Thyroid gland (tissue), 4 donors: ENCODE measurements at regions of chr11 and their contacts with region 1.

Region 1: GRCh38 chr11:16785520-16786128 is 47.2 kb downstream of the C11orf58 start:
- DNase-seq: peak; percentile 76 to 79
- H3K4me3 ChIP-seq: no peak overlapping the region
- H3K27ac ChIP-seq: peak overlapping the region in 1 of 3 donors; percentile 33
- H3K4me1 ChIP-seq: peaks cover 44 to 59% of the 10 kb centered on the region in 2 donors
- H3K27me3 ChIP-seq: no peaks in the 10 kb centered on the region
- CTCF ChIP-seq: peak; percentile 67 to 91 (median 76)
- POLR2A ChIP-seq: no peak

Region 2: GRCh38 chr11:16871368-16871767 is 85.7 kb after region 1 on chr11:
- intact Hi-C with region 1: loop called (anchors 5 kb)
- DNase-seq: no peak
- H3K4me3 ChIP-seq: no peak overlapping the region
- H3K27ac ChIP-seq: no peak overlapping the region
- H3K4me1 ChIP-seq: peaks cover 0 to 2% of the 10 kb centered on the region in 2 donors
- H3K27me3 ChIP-seq: no peaks in the 10 kb centered on the region
- CTCF ChIP-seq: no peak
- POLR2A ChIP-seq: no peak

Region 3: DNA sequence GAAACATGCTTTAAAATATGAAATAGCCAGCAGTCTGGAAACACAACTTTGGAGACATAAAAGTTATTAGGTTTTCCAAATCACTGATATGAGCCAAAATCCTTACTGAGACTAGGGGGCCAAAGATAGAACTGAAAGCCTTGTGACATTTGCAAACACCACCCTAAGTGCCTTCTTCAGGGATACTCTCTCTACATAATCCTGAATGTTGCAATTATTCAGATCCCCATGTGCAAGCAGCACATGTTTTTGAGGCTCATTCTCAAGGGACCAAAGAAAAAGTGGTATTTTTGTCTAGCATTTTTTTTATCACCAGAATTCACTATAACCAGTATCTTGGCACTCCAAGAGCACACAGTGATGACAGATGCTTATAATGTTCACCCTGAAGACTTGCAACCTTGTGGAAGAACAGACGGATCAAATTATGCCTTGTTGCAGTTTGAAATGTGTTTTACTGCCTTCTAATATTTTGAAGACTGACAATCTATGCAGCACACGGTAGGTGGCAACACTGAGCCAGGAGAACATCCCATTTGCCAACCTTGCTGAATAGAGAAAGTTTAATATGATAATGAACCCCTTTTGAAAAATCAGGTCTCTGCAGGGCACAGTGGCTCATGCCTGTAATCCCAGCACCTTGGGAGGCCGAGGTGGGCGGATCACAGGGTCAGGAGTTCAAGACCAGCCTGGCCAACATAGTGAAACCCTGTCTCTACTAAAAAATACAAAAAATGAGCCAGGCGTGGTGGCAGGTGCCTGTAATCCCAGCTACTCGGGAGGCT is 150.1 kb after region 1 on chr11:
- intact Hi-C with region 1: loop called (anchors 10 kb)
- DNase-seq: peak in 1 of 2 donors; percentile 39
- H3K4me3 ChIP-seq: no peak overlapping the region
- H3K27ac ChIP-seq: peak overlapping the region in 1 of 3 donors; percentile 64
- H3K4me1 ChIP-seq: peaks cover 16 to 38% of the 10 kb centered on the region in 2 donors
- H3K27me3 ChIP-seq: no peaks in the 10 kb centered on the region
- CTCF ChIP-seq: peak in 5 of 6 experiments; percentile 13 to 69 (median 62)
- POLR2A ChIP-seq: no peak

Region 4: DNA sequence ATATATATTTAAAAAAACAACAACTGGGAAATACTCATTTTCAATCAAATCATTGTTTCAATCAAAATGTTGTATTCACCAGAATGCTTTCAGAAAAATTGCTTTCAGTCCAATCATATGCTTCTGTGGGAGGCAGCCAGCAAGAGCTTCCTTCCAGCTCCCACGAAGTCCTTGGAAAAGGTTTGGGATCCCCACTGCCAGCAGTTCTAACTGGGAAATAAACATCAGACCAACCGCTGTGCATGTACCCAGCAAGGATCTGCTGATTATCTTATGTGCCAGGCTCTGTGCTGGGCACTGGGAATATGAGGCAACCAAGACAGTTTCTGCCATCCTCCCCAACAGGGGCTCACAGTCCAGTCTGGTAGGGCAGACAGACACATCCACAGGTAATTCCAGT is 281.1 kb after region 1 on chr11:
- intact Hi-C with region 1: loop called (anchors 5 kb)
- DNase-seq: no peak
- H3K4me3 ChIP-seq: no peak overlapping the region
- H3K27ac ChIP-seq: no peak overlapping the region
- H3K4me1 ChIP-seq: no peaks in the 10 kb centered on the region
- H3K27me3 ChIP-seq: no peaks in the 10 kb centered on the region
- CTCF ChIP-seq: no peak
- POLR2A ChIP-seq: no peak